ENCODE measurements at regions of chr9 and their contacts with region 1.

Region 1: DNA sequence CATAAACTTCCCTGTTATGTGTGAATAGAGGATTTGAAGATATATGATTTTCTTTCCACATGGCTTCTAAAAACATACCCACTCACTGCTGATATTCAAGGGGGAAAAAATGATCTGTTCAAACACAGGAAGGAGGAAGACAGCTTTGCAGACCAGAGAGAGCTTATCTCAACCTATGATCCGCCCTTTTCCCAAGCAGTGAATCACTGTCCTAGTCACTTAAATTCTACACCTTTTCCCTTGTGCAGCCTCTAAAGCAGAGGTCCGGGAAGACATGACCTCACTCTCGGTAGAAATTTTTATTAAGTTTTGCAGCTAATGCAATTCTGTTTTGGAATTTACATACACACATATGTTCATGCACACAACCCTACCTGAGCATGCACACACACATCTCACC is 197.2 kb downstream of the DIRAS2 start:
- DNase-seq: no peak
- H3K4me3 ChIP-seq: no peak overlapping the region
- H3K27ac ChIP-seq: no peak overlapping the region
- H3K4me1 ChIP-seq: no peaks in the 10 kb centered on the region
- H3K27me3 ChIP-seq: no peaks in the 10 kb centered on the region
- CTCF ChIP-seq: no peak

Region 2: DNA sequence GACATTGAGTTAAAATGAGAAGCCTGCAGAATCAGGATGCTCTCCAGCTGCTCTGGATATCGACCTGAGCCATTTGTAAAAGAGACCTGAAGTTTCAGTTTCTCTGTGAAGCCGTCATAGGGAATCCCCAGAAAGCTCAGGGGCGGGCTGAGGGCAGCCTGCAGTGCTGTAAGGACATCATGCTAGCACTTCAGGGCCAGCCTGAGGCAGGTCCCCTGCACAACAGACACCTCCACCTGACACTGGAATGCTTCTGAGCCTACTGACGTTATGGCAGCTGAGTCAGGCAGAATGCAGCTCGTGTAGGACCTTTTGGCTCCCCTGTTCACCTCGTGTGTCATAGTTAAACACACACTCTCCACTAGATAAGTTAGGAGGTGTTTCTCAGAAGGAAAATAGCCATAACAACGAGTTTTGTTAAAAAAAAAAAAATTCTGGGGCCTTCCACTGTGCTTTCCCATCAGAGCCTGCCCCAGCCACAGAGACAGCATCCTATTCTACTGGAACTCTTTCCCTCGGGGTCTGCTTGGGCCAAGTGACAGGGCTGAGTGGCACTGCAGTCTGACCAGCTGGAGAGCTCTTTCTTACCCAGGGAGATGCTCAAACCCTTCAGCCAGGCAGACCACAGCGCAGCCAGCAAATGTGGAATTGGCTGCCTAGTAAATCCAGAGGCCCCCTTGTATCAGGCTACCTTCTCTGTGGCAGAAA is 157.7 kb before region 1 on chr9:
- intact Hi-C with region 1: no loop called
- DNase-seq: no peak
- H3K4me3 ChIP-seq: no peak overlapping the region
- H3K27ac ChIP-seq: no peak overlapping the region
- H3K4me1 ChIP-seq: no peaks in the 10 kb centered on the region
- H3K27me3 ChIP-seq: no peaks in the 10 kb centered on the region
- CTCF ChIP-seq: no peak

Region 3: GRCh38 chr9:90479701-90480100 is 34.3 kb after region 1 on chr9:
- intact Hi-C with region 1: loop called (anchors 1 kb)
- DNase-seq: no peak
- H3K4me3 ChIP-seq: no peak overlapping the region
- H3K27ac ChIP-seq: no peak overlapping the region
- H3K4me1 ChIP-seq: no peaks in the 10 kb centered on the region
- H3K27me3 ChIP-seq: no peaks in the 10 kb centered on the region
- CTCF ChIP-seq: no peak

Measured in tibial artery (tissue), 4 donors.